CD8-positive, alpha-beta T cell (primary cell): ENCODE measurements at regions of chr11 and their contacts with region 1.

Region 1: DNA sequence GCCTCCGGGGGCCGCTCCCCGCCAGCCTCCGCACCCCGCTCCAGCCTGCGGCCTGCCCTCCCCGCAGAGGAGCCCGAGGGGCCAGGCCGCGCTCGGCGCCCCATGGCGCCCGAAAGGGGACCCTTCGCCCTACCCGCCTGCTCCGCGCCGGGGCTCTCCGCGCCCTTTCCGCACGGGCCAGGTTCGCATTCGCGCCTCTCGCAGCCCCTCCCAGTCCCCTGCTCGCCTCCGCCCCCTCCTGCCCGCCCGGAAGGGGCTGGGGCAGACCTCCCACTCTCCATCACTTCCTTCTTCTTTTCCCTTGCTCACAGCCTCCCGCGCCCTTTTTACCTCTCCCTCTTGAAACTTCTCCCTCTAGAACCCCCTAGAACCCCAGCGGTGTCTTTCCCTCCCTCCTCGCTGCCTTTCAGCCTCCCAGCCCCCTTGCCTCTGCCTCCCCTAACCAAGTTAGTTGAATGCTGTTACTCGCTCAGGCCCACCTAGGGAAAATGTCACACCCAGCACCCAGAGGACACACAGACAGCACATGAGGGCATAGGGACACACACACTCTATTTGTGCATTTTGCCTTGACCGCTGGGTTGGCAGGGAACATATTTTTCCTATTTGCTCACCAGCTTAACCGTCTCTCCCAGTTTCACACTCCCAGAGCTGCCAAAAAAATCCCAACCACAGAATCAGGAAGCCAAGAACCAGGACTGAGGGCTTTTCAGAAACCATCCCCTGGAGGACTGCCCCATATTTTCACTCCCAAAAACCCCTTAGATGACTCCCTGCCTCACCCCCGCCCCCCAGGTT is at the start of gene SLC43A3:
- DNase-seq: peak in 8 of 9 experiments; percentile 46 to 80 (median 64)
- ATAC-seq: peak; percentile 32
- H3K4me3 ChIP-seq: peak within 1 kb of the TSS; percentile 47 to 63
- H3K4me3 Mint-ChIP-seq: peak within 1 kb of the TSS; percentile 86
- H3K27ac ChIP-seq: peak within 1 kb of the TSS in 1 of 2 experiments; percentile 85
- H3K27ac Mint-ChIP-seq: peak within 1 kb of the TSS; percentile 89
- H3K4me1 ChIP-seq: peaks cover 31% of the 10 kb centered on the region
- H3K4me1 Mint-ChIP-seq: peaks cover 46% of the 10 kb centered on the region
- H3K27me3 ChIP-seq: no peaks in the 10 kb centered on the region
- H3K27me3 Mint-ChIP-seq: no peaks in the 10 kb centered on the region
- CTCF ChIP-seq: no peak
- total RNA-seq, gene SLC43A3: 9.3 to 11.3 TPM

Region 2: GRCh38 chr11:57324886-57325734 is 102.0 kb before region 1 on chr11 and contains the start of gene TNKS1BP1:
- CTCF ChIA-PET with region 1: no interaction called
- POLR2A ChIA-PET with region 1: interaction called, 3 read pairs
- intact Hi-C with region 1: loop called (anchors 1 to 5 kb)
- DNase-seq: peak; percentile 74 to 93 (median 88)
- ATAC-seq: peak; percentile 88
- H3K4me3 ChIP-seq: peak within 1 kb of the TSS; percentile 75 to 98
- H3K4me3 Mint-ChIP-seq: peak within 1 kb of the TSS; percentile 87
- H3K27ac ChIP-seq: peak within 1 kb of the TSS; percentile 80 to 81
- H3K27ac Mint-ChIP-seq: peak within 1 kb of the TSS; percentile 96
- H3K4me1 ChIP-seq: peaks cover 29% of the 10 kb centered on the region
- H3K4me1 Mint-ChIP-seq: peaks cover 34% of the 10 kb centered on the region
- H3K27me3 ChIP-seq: no peaks in the 10 kb centered on the region
- H3K27me3 Mint-ChIP-seq: no peaks in the 10 kb centered on the region
- CTCF ChIP-seq: no peak
- total RNA-seq, gene TNKS1BP1: 13.5 to 14.0 TPM

Region 3: DNA sequence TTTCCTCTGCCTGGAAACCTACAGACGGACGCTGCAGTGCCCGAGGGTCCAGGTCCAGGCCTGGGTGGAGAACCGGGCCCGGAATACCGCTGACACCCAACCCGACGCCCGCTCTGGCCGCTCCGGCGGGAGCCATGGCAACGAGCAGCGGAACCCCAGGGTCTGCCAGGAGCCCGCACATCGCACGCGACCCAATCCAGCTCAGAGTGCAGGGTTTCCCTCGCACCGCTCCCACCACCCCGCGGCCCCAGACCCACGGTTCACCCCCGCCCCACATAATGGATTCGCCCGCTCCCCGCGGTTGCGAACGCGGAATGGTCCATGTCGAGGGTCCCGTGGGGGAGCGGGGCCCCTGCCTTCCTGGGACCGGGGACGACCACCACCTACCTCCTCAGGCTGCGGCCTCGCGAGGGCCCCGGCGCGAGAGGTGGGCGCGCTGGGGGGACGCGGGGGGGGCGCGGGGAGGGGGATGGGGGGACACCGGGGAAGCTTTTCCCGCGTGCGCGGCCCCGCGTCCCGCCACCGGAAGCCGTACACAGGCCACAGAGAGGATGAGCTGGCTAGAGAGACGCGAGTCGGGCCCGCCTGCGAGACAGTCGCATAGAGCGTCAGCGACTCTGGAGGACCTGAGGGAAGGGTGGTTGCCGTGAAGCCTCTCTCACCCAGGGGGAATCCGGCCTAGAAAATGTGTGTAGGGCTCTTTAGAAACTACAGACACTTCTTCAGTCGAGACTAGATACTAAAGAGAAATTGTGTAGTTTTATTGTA is 91.6 kb before region 1 on chr11 and contains the start of gene SSRP1:
- CTCF ChIA-PET with region 1: no interaction called
- POLR2A ChIA-PET with region 1: no interaction called
- intact Hi-C with region 1: loop called (anchors 5 kb)
- DNase-seq: peak; percentile 70 to 95 (median 86)
- ATAC-seq: peak; percentile 96
- H3K4me3 ChIP-seq: peak within 1 kb of the TSS; percentile 78 to 82
- H3K4me3 Mint-ChIP-seq: peak within 1 kb of the TSS; percentile 86
- H3K27ac ChIP-seq: peak within 1 kb of the TSS; percentile 83 to 91
- H3K27ac Mint-ChIP-seq: peak within 1 kb of the TSS; percentile 94
- H3K4me1 ChIP-seq: peaks cover 23% of the 10 kb centered on the region
- H3K4me1 Mint-ChIP-seq: peaks cover 33% of the 10 kb centered on the region
- H3K27me3 ChIP-seq: no peaks in the 10 kb centered on the region
- H3K27me3 Mint-ChIP-seq: no peaks in the 10 kb centered on the region
- CTCF ChIP-seq: no peak
- total RNA-seq, gene SSRP1: 34.3 to 36.3 TPM

Region 4: GRCh38 chr11:57644748-57645688 is 217.9 kb after region 1 on chr11:
- CTCF ChIA-PET with region 1: no interaction called
- POLR2A ChIA-PET with region 1: no interaction called
- intact Hi-C with region 1: loop called (anchors 1 to 10 kb)
- DNase-seq: peak; percentile 74 to 93 (median 85)
- ATAC-seq: peak; percentile 61
- H3K4me3 ChIP-seq: no peak overlapping the region
- H3K4me3 Mint-ChIP-seq: no peak overlapping the region
- H3K27ac ChIP-seq: no peak overlapping the region
- H3K27ac Mint-ChIP-seq: no peak overlapping the region
- H3K4me1 ChIP-seq: peaks cover 15% of the 10 kb centered on the region
- H3K4me1 Mint-ChIP-seq: peaks cover 34% of the 10 kb centered on the region
- H3K27me3 ChIP-seq: peaks cover 0 to 22% of the 10 kb centered on the region in 2 experiments
- H3K27me3 Mint-ChIP-seq: peaks cover 48% of the 10 kb centered on the region
- CTCF ChIP-seq: peak; percentile 78

Region 5: DNA sequence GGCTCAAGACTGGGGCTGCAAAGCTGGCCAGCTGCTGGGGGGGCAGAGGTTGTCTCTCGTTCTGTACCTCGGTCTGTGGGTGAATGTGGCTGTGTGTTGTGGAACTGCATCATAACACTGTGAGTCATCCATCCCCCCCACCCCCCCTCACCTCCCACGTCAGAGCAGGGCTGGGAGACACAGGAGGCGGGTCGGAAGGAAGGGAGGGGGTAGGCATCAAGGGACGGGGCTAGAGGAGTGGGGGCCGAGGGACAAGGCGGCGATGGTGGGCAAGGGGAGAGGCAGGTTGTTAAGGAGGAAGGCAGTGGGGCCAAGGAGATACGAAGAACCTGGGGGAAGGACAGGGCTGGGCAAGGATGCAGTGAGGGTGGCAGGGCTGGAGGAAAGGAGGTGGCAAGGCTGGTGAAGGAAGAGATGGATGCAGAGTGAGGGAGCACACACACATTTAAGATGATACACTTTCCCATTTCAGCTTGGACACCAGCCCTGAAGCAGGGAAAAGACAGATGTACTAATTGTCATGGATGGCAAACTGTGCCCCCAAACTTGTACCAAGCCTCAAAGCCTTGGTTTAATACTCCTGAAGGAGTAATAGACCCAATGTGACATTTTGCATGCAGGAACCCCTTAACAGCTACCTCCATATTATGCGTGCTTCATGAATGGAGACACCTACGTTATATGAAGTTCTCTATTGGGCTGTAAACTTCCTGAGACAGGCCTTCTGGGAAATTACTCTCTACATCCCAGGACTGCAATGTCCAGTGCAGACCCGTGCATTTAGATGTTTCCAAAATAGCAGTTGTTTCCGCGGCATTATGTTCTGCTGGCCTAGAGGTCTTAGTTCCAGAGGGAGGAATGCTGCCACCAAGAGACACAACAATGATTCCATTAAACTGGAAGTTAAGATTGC is 223.0 kb after region 1 on chr11 and contains the start of gene YPEL4:
- CTCF ChIA-PET with region 1: no interaction called
- POLR2A ChIA-PET with region 1: no interaction called
- intact Hi-C with region 1: loop called (anchors 1 to 10 kb)
- DNase-seq: peak; percentile 52 to 93 (median 79)
- ATAC-seq: peak; percentile 88
- H3K4me3 ChIP-seq: peak within 1 kb of the TSS; percentile 53 to 78
- H3K4me3 Mint-ChIP-seq: peak within 1 kb of the TSS; percentile 86
- H3K27ac ChIP-seq: peak within 1 kb of the TSS; percentile 41 to 68
- H3K27ac Mint-ChIP-seq: peak within 1 kb of the TSS; percentile 91
- H3K4me1 ChIP-seq: peaks cover 19% of the 10 kb centered on the region
- H3K4me1 Mint-ChIP-seq: peaks cover 53% of the 10 kb centered on the region
- H3K27me3 ChIP-seq: peaks cover 0 to 20% of the 10 kb centered on the region in 2 experiments
- H3K27me3 Mint-ChIP-seq: peaks cover 41% of the 10 kb centered on the region
- CTCF ChIP-seq: no peak
- total RNA-seq, gene YPEL4: 7.2 to 7.9 TPM